ENCODE measurements at regions of chr15 and their contacts with region 1.

Region 1: GRCh38 chr15:66923438-66923881 is 141.9 kb upstream of the SMAD3 start:
- DNase-seq: peak; percentile 68
- ATAC-seq: peak; percentile 89
- H3K4me3 Mint-ChIP-seq: no peak overlapping the region
- H3K27ac Mint-ChIP-seq: no peak overlapping the region
- H3K4me1 Mint-ChIP-seq: peaks cover 3% of the 10 kb centered on the region
- H3K27me3 Mint-ChIP-seq: peaks cover 14% of the 10 kb centered on the region
- CTCF ChIP-seq: peak; percentile 74

Region 2: GRCh38 chr15:66765478-66766281 is 157.8 kb before region 1 on chr15:
- CTCF ChIA-PET with region 1: no interaction called
- POLR2A ChIA-PET with region 1: no interaction called
- intact Hi-C with region 1: no loop called
- DNase-seq: no peak
- ATAC-seq: no peak
- H3K4me3 Mint-ChIP-seq: no peak overlapping the region
- H3K27ac Mint-ChIP-seq: no peak overlapping the region
- H3K4me1 Mint-ChIP-seq: peaks cover 4% of the 10 kb centered on the region
- H3K27me3 Mint-ChIP-seq: peaks cover 28% of the 10 kb centered on the region
- CTCF ChIP-seq: no peak

Region 3: GRCh38 chr15:66894986-66895780 is 28.3 kb before region 1 on chr15:
- CTCF ChIA-PET with region 1: no interaction called
- POLR2A ChIA-PET with region 1: no interaction called
- intact Hi-C with region 1: no loop called
- DNase-seq: no peak
- ATAC-seq: no peak
- H3K4me3 Mint-ChIP-seq: no peak overlapping the region
- H3K27ac Mint-ChIP-seq: no peak overlapping the region
- H3K4me1 Mint-ChIP-seq: no peaks in the 10 kb centered on the region
- H3K27me3 Mint-ChIP-seq: peaks cover 1% of the 10 kb centered on the region
- CTCF ChIP-seq: no peak

Region 4: DNA sequence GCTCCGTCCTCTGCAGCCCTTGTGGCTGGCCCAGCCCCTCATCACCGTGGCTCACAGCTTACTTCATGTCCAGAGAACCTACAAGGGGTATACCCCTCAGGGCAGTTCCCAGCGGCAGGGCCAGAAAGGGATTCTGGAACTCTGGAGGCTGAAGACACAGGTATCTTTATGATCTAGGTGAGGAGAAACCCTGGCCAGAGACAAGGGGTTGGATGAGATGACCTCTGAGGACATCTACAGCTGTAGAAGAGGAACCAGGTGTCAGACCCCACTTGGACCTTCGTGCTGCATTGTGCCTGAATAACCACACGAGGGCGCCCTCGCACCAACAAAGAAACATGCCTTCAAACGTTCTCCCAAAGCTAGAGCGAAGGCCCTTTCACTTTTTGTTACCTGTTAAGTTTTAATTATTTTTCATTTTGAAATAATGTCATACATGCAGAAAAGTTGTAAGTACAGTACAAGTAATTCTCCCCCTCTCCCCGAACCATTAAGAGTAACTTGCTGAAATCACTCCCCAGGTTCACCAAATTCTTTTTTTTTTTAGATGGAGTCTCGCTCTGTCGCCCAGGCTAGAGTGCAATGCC is 23.2 kb after region 1 on chr15:
- CTCF ChIA-PET with region 1: interaction called, 10 read pairs
- POLR2A ChIA-PET with region 1: no interaction called
- intact Hi-C with region 1: no loop called
- DNase-seq: peak; percentile 82
- ATAC-seq: peak; percentile 89
- H3K4me3 Mint-ChIP-seq: no peak overlapping the region
- H3K27ac Mint-ChIP-seq: no peak overlapping the region
- H3K4me1 Mint-ChIP-seq: peaks cover 2% of the 10 kb centered on the region
- H3K27me3 Mint-ChIP-seq: no peaks in the 10 kb centered on the region
- CTCF ChIP-seq: peak; percentile 89